ENCODE measurements at regions of chr7 and their contacts with region 1.

Region 1: GRCh38 chr7:43439631-43440401 is 143.1 kb upstream of the STK17A start:
- DNase-seq: peak; percentile 65
- ATAC-seq: peak; percentile 60
- H3K4me3 Mint-ChIP-seq: no peak overlapping the region
- H3K27ac Mint-ChIP-seq: no peak overlapping the region
- H3K4me1 Mint-ChIP-seq: no peaks in the 10 kb centered on the region
- H3K27me3 Mint-ChIP-seq: peaks cover 13% of the 10 kb centered on the region

Region 2: GRCh38 chr7:42940985-42941847 is 498.6 kb before region 1 on chr7:
- CTCF ChIA-PET with region 1: interaction called, 10 read pairs
- DNase-seq: peak; percentile 87
- ATAC-seq: peak; percentile 61
- H3K4me3 Mint-ChIP-seq: no peak overlapping the region
- H3K27ac Mint-ChIP-seq: no peak overlapping the region
- H3K4me1 Mint-ChIP-seq: peaks cover 19% of the 10 kb centered on the region
- H3K27me3 Mint-ChIP-seq: no peaks in the 10 kb centered on the region

Region 3: GRCh38 chr7:43170571-43170970 is 269.2 kb before region 1 on chr7:
- CTCF ChIA-PET with region 1: no interaction called
- DNase-seq: no peak
- ATAC-seq: no peak
- H3K4me3 Mint-ChIP-seq: no peak overlapping the region
- H3K27ac Mint-ChIP-seq: no peak overlapping the region
- H3K4me1 Mint-ChIP-seq: no peaks in the 10 kb centered on the region
- H3K27me3 Mint-ChIP-seq: peaks cover 20% of the 10 kb centered on the region

Region 4: DNA sequence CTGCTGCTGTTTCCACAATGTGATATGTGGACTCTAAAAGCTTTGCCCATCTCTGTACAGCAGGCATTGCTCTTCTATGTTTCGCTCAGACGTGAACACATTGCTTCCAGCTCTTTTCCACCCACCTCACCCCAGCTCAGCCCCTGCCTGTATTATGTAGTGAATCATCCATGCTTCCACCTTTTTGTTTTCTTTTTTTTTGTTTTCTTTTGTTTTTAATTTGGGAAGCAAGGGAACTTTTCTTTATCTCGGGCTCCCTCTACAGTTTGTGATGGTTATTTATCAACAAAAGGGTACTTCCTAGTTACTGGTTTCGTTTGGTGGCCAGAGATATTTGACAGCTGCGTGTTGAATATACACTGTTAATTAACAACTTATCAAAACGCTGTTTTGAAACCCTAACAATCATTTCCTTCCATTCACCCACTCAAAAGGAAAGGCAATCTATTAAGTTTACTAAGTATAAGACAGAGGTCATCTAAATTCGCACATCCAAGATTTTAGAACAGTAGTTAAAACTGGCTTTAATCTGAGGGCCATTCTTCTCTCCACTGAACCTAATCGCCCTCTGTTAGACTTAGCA is 15.2 kb after region 1 on chr7:
- CTCF ChIA-PET with region 1: interaction called, 54 read pairs
- DNase-seq: no peak
- ATAC-seq: no peak
- H3K4me3 Mint-ChIP-seq: no peak overlapping the region
- H3K27ac Mint-ChIP-seq: no peak overlapping the region
- H3K4me1 Mint-ChIP-seq: peaks cover 8% of the 10 kb centered on the region
- H3K27me3 Mint-ChIP-seq: peaks cover 23% of the 10 kb centered on the region

Measured in activated CD8-positive, alpha-beta memory T cell treated with anti-CD3 and anti-CD28 coated beads, Interleukin-2, amount 10 ng/mL, durations not matched to agents 7 days and 5 days (primary cell).